ENCODE measurements at regions of chr16 and their contacts with region 1.

Region 1: DNA sequence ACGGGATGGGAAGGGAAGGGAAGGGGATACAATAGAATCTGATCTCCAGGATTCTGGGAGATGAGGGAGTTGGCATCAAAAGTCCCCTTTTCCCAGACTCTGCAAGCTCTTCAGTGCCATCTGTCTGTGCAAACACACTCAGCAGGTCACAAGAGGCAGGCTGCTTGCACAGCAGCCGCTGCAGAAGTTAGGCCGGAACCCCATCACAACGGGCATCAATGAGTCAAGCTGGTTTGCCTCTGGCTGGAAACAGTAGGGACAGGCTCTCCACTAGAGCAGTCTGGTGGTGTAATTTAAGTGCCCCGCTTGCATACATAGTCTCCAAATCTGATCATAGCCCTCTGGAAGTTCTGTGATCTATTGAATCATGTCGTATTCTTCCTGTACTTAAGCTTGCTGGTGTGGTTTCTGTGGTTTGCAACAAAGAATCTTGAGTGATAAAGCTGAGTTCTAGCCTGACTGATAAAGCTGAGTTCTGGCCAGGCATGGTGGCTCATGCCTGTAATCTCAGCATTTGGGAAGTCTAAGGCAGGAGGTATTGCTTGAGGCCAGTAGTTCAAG is 33.7 kb upstream of the KDM8 start:
- DNase-seq: peak; percentile 57 to 88 (median 85)
- H3K4me3 ChIP-seq: no peak overlapping the region
- H3K4me3 Mint-ChIP-seq: peak overlapping the region; percentile 2 to 81 (median 68)
- H3K27ac ChIP-seq: no peak overlapping the region
- H3K27ac Mint-ChIP-seq: peak overlapping the region; percentile 46 to 99 (median 92)
- H3K4me1 ChIP-seq: peaks cover 66% of the 10 kb centered on the region
- H3K4me1 Mint-ChIP-seq: peaks cover 56 to 71% (median 69%) of the 10 kb centered on the region in 3 donors
- H3K27me3 ChIP-seq: no peaks in the 10 kb centered on the region
- H3K27me3 Mint-ChIP-seq: no peaks in the 10 kb centered on the region

Region 2: DNA sequence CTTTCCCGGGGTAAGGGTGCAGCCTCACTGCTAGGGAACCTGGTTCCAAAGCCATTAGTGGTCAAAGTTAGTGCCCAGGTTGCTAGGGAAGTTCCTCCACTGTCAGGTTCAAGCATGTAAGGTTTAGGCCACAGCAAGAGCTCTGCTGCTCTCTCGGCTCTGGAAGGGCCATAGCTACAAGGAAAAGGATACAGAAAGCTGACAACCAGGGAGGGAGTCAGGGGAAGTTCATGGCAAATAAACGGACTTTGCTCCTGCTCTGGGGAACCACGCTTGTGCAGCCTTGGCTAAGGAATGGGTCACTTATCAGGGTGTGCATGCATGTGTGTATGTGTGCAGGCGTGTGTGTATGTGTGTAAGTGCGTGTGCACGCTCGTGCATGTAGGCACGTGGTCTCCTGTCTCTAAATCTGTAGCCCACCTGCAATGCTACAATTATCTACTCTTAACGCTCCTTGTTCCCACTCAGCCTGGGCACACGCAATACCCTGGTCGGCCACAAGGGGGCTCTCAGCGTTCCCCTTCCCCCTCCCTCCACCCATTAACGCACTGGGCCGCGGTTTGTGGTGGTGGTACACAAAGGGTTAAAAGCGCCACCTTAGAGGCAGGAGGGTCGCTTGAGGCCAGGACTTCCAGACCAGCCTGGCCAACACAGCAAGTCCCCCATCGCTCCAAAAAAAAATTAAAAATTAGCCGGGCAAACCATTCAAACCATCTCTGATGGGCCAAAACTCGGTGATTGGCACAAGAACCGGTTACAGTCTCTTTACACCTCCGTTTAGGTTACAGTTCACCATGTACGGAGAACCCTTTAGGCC is 14.7 kb before region 1 on chr16:
- CTCF ChIA-PET with region 1: interaction called, 85 read pairs
- POLR2A ChIA-PET with region 1: no interaction called
- DNase-seq: peak; percentile 36 to 71 (median 50)
- H3K4me3 ChIP-seq: no peak overlapping the region
- H3K4me3 Mint-ChIP-seq: no peak overlapping the region
- H3K27ac ChIP-seq: no peak overlapping the region
- H3K27ac Mint-ChIP-seq: peak overlapping the region in 3 of 8 donors; percentile 2 to 60 (median 27)
- H3K4me1 ChIP-seq: peaks cover 10% of the 10 kb centered on the region
- H3K4me1 Mint-ChIP-seq: peaks cover 4 to 7% (median 5%) of the 10 kb centered on the region in 3 donors
- H3K27me3 ChIP-seq: no peaks in the 10 kb centered on the region
- H3K27me3 Mint-ChIP-seq: no peaks in the 10 kb centered on the region

Region 3: GRCh38 chr16:27203429-27204231 is 34.0 kb after region 1 on chr16 and contains the start of gene KDM8:
- CTCF ChIA-PET with region 1: interaction called, 11 read pairs
- POLR2A ChIA-PET with region 1: interaction called, 9 read pairs
- DNase-seq: peak; percentile 99 to 100 (median 100)
- H3K4me3 ChIP-seq: peak within 1 kb of the TSS; percentile 87
- H3K4me3 Mint-ChIP-seq: peak within 1 kb of the TSS; percentile 90 to 99 (median 95)
- H3K27ac ChIP-seq: peak within 1 kb of the TSS; percentile 86
- H3K27ac Mint-ChIP-seq: peak within 1 kb of the TSS; percentile 93 to 100 (median 99)
- H3K4me1 ChIP-seq: peaks cover 51% of the 10 kb centered on the region
- H3K4me1 Mint-ChIP-seq: peaks cover 52 to 63% (median 63%) of the 10 kb centered on the region in 3 donors
- H3K27me3 ChIP-seq: no peaks in the 10 kb centered on the region
- H3K27me3 Mint-ChIP-seq: no peaks in the 10 kb centered on the region
- total RNA-seq, gene KDM8: 9.1 to 10.8 TPM

Region 4: GRCh38 chr16:27650073-27650701 is 480.6 kb after region 1 on chr16:
- CTCF ChIA-PET with region 1: no interaction called
- POLR2A ChIA-PET with region 1: no interaction called
- DNase-seq: no peak
- H3K4me3 ChIP-seq: no peak overlapping the region
- H3K4me3 Mint-ChIP-seq: no peak overlapping the region
- H3K27ac ChIP-seq: no peak overlapping the region
- H3K27ac Mint-ChIP-seq: peak overlapping the region in 1 of 8 donors; percentile 75
- H3K4me1 ChIP-seq: no peaks in the 10 kb centered on the region
- H3K4me1 Mint-ChIP-seq: no peaks in the 10 kb centered on the region
- H3K27me3 ChIP-seq: no peaks in the 10 kb centered on the region
- H3K27me3 Mint-ChIP-seq: no peaks in the 10 kb centered on the region

Measured in CD8-positive, alpha-beta memory T cell (primary cell).